ENCODE measurements at regions of chr14 and their contacts with region 1.

Region 1: DNA sequence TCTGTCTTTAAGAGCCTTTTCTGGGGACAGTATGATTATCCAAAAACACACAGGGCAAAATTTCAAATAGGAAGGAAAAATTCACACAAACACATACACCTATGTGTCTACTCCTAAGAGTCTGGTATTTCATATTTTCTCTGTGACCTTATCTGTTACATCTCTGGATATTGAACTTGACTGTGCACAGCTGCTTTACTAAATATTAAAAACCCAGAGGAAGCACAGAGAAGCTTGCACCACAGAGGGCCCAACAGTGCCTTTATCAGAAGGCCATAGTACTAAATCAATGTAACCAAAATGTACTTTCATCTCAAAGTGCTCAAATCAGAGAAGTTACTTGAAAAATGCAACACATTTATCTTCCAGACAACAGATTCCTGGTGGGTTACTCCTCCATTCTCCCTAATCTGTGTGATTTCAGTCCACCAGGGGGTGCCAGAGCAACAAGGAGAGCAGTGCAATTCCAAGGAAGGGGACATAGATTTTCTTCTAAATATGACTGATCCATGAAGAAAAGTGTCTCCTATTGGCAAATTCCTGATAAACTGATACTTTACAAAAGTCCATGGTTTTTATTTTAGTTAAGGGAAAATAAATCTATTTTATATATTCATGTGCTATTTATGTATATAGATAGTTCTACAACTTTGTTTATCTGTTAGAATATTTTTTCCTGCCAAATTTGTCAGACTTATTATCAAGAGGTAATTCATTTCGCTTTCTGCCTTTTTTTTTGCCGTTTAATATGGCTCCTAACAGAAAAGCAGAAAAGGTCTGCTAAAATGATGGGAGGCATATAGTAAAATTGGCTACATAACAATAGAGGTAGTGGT is 617.6 kb downstream of the LRFN5 start:
- DNase-seq: peak; percentile 87
- H3K4me3 ChIP-seq: no peak overlapping the region
- H3K27ac ChIP-seq: no peak overlapping the region
- H3K4me1 ChIP-seq: peaks cover 13% of the 10 kb centered on the region
- H3K27me3 ChIP-seq: no peaks in the 10 kb centered on the region
- CTCF ChIP-seq: peak; percentile 93

Region 2: DNA sequence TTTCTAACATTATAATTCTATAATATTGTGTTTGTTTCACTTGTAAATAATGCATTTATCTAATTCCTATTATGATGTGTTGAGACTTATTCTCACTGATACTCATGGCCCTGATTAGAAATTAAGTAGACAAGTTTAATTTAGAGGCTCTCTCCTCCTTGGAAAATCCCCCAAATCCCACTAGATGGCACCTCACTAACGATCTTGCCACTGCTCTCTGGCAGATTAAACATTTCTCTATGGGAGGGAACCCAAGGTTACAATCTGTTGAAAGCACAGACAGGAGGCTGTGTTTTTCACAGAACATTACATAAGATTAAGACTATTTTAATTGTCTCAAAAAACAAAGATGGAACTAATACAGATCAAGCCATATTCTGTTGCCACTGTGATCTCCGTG is 298.9 kb before region 1 on chr14:
- CTCF ChIA-PET with region 1: no interaction called
- POLR2A ChIA-PET with region 1: no interaction called
- intact Hi-C with region 1: loop called (anchors 5 kb)
- DNase-seq: peak; percentile 80
- H3K4me3 ChIP-seq: no peak overlapping the region
- H3K27ac ChIP-seq: no peak overlapping the region
- H3K4me1 ChIP-seq: peaks cover 9% of the 10 kb centered on the region
- H3K27me3 ChIP-seq: no peaks in the 10 kb centered on the region
- CTCF ChIP-seq: peak; percentile 73

Region 3: GRCh38 chr14:42078345-42078744 is 145.9 kb before region 1 on chr14:
- CTCF ChIA-PET with region 1: no interaction called
- POLR2A ChIA-PET with region 1: no interaction called
- intact Hi-C with region 1: no loop called
- DNase-seq: no peak
- H3K4me3 ChIP-seq: no peak overlapping the region
- H3K27ac ChIP-seq: no peak overlapping the region
- H3K4me1 ChIP-seq: no peaks in the 10 kb centered on the region
- H3K27me3 ChIP-seq: no peaks in the 10 kb centered on the region
- CTCF ChIP-seq: no peak

Region 4: GRCh38 chr14:42335918-42336317 is 111.6 kb after region 1 on chr14:
- CTCF ChIA-PET with region 1: no interaction called
- POLR2A ChIA-PET with region 1: no interaction called
- intact Hi-C with region 1: no loop called
- DNase-seq: no peak
- H3K4me3 ChIP-seq: no peak overlapping the region
- H3K27ac ChIP-seq: no peak overlapping the region
- H3K4me1 ChIP-seq: no peaks in the 10 kb centered on the region
- H3K27me3 ChIP-seq: no peaks in the 10 kb centered on the region
- CTCF ChIP-seq: no peak

Region 5: DNA sequence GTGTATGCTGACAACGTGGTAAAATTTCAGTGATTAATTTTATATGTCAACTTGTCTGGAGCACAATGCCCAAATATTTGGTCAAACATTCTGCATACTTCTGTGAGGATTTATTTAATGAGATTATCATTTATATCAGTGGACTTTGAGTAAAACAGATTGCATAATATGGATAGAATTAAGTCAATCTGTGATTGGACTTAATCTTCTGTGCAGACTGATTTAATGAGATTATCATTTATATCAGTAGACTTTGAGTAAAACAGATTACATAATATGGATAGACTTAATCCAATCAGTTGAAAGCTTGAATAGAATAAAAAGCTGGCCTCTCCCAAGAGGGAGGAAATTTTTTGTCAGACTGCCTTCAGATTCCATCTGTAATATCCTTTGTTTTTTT is 795.5 kb after region 1 on chr14:
- CTCF ChIA-PET with region 1: interaction called, 3 read pairs
- POLR2A ChIA-PET with region 1: no interaction called
- intact Hi-C with region 1: loop called (anchors 10 kb)
- DNase-seq: peak; percentile 82
- H3K4me3 ChIP-seq: no peak overlapping the region
- H3K27ac ChIP-seq: no peak overlapping the region
- H3K4me1 ChIP-seq: peaks cover 2% of the 10 kb centered on the region
- H3K27me3 ChIP-seq: no peaks in the 10 kb centered on the region
- CTCF ChIP-seq: no peak

Measured in A673 (cell line).